BJ (cell line): ENCODE measurements at regions of chr2 and their contacts with region 1.

Region 1: GRCh38 chr2:222690564-222691200 is 19.2 kb downstream of the MOGAT1 start:
- DNase-seq: no peak
- H3K4me3 ChIP-seq: no peak overlapping the region
- H3K27me3 ChIP-seq: no peaks in the 10 kb centered on the region
- CTCF ChIP-seq: peak; percentile 100

Region 2: DNA sequence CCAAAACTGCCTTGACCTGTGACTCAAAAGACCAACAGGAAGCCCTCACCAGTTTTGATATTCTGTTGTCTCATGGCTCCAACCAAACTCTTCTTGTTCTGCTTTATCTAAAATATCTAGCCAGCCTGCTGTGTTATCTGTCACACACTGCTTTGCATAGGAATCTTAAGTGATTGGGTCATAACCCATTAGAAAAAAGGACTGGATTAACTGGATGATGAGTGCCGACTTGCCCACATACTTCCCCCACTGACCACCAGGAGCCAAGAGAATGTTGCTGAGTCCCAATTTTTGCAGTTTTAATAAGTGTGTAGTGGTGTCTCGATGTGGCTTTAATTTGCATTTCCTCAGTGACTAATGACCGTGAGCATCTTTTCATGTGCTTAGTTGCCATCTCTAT is 12.7 kb before region 1 on chr2:
- CTCF ChIA-PET with region 1: interaction called, 14 read pairs
- POLR2A ChIA-PET with region 1: no interaction called
- DNase-seq: no peak
- H3K4me3 ChIP-seq: no peak overlapping the region
- H3K27me3 ChIP-seq: peaks cover 13% of the 10 kb centered on the region
- CTCF ChIP-seq: no peak

Region 3: GRCh38 chr2:222707689-222708525 is 17.2 kb after region 1 on chr2:
- CTCF ChIA-PET with region 1: interaction called, 83 read pairs
- POLR2A ChIA-PET with region 1: no interaction called
- DNase-seq: no peak
- H3K4me3 ChIP-seq: no peak overlapping the region
- H3K27me3 ChIP-seq: no peaks in the 10 kb centered on the region
- CTCF ChIP-seq: peak; percentile 88

Region 4: GRCh38 chr2:222892321-222892720 is 201.6 kb after region 1 on chr2:
- CTCF ChIA-PET with region 1: interaction called, 18 read pairs
- POLR2A ChIA-PET with region 1: no interaction called
- DNase-seq: no peak
- H3K4me3 ChIP-seq: no peak overlapping the region
- H3K27me3 ChIP-seq: no peaks in the 10 kb centered on the region
- CTCF ChIP-seq: no peak

Region 5: GRCh38 chr2:222912117-222912516 is 221.4 kb after region 1 on chr2:
- CTCF ChIA-PET with region 1: interaction called, 14 read pairs
- POLR2A ChIA-PET with region 1: no interaction called
- DNase-seq: no peak
- H3K4me3 ChIP-seq: no peak overlapping the region
- H3K27me3 ChIP-seq: no peaks in the 10 kb centered on the region
- CTCF ChIP-seq: no peak

Region 6: DNA sequence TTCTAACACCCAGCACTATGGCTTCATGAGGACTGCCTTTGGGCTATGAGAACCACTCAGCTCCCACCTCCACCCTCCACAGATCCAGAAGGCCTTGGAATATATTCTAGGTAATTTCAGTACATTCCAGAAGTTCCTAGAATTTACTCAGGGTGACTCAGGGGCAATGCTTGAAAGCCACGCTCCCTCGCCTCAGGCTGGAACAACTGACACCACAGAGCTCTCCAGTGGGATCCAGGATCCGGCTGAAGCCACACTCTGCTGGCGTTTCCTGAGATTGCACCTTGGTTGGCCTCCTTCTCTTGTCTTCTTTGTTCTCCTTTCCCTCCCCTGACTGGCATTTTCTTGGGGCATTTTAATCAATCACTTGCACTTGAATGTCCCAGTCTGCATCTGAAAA is 268.7 kb after region 1 on chr2:
- CTCF ChIA-PET with region 1: interaction called, 17 read pairs
- POLR2A ChIA-PET with region 1: no interaction called
- DNase-seq: peak; percentile 75
- H3K4me3 ChIP-seq: no peak overlapping the region
- H3K27me3 ChIP-seq: no peaks in the 10 kb centered on the region
- CTCF ChIP-seq: peak; percentile 74

Region 7: DNA sequence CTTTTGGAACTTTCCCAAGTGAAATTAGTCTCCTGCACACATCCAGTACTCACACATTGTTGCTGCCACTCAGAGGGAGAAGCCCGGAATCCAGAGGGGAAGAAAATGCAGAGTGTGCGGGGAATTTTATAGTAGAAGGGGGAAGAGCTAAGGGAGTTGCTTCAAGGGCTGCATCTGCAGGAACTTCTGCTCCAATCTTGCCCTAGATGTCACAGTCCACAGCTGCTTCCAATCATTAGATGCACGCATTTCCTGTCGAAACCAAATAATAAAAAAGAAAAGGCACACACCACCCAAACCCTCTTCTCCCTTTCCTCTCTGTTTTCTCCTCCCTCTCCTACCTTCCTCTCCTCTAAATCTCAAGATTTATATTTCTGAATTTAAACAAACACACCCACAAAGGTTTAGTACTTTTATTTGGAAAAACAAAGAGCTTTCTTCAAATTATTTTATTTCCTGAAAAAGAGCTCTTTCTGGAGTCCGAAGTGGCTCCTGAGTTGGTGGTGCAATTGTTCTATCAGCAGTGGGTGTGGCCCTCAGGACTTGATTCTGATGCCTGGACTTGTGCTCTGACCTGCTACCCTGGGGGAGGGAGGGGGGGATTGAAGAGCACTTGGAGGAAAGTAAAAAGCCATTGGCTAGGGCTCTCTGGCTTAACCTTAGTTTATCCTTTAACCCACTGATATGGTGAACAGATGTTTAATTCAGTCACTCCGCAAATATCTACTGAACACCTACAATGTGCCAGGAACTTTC is 433.4 kb after region 1 on chr2:
- CTCF ChIA-PET with region 1: no interaction called
- POLR2A ChIA-PET with region 1: no interaction called
- DNase-seq: peak; percentile 68
- H3K4me3 ChIP-seq: no peak overlapping the region
- H3K27me3 ChIP-seq: no peaks in the 10 kb centered on the region
- CTCF ChIP-seq: no peak